ENCODE measurements at regions of chr17 and their contacts with region 1.

Region 1: GRCh38 chr17:81902023-81902652 is at the start of gene NPB:
- DNase-seq: peak; percentile 65 to 73 (median 68)
- ATAC-seq: peak; percentile 86
- H3K4me3 ChIP-seq: peak within 1 kb of the TSS; percentile 32; the same call in 1 of the 2 replicates
- H3K27ac ChIP-seq: peak within 1 kb of the TSS; percentile 27; the same call in 1 of the 3 replicates
- H3K4me1 ChIP-seq: peaks cover 10 to 84% of the 10 kb centered on the region in 2 experiments
- H3K27me3 ChIP-seq: no peaks in the 10 kb centered on the region
- CTCF ChIP-seq: no peak
- EP300 ChIP-seq: no peak
- POLR2A ChIP-seq: no peak
- RAD21 ChIP-seq: no peak
- polyA plus RNA-seq, gene NPB: 0.43 to 0.61 TPM

Region 2: DNA sequence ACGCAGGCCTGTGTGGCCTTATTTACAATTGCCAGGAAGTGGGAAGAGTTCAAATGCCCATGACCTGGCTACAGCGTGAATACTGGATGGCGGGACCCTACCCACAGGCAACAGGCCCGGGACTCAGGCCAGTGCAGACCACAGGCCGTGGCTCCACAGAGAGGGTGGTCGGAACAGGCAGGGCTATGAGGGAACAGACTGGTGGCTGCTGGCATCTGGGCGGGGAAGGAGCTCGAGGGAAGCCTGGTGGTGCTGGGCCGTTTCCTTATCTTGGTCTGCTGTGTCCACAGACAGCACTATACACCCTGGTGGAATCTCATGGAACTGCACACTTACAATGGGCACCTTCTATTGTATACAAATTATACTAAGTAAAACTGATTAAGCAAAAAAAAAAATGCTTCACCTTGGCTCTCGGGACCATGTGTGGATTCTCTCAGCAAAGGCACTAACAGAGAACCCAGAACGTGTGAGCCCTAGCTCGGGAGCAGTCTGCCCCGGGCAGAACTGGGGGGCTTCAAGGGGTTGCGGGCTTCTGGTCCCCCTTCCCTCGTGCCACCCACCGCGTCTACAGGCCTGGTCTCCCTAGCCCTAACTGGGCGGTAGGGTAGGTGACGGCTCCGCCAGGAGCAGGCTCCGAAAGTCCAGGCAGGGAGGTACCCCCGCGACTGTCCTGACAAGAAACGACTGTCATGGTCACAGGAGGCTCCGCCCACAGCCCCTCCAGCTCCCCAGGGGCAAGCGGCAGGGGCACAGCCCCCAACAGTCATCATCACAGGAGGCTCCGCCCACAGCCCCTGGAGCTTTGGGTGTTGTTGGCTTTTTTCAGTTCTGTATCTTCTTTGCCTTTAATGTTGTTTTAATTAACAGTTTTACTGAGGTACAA is 701.2 kb before region 1 on chr17:
- CTCF ChIA-PET with region 1: no interaction called
- POLR2A ChIA-PET with region 1: no interaction called
- in situ Hi-C with region 1: no loop called
- intact Hi-C with region 1: no loop called
- DNase-seq: peak; percentile 65 to 82 (median 75)
- ATAC-seq: peak; percentile 98
- H3K4me3 ChIP-seq: no peak overlapping the region
- H3K27ac ChIP-seq: no peak overlapping the region
- H3K4me1 ChIP-seq: peaks cover 3 to 31% of the 10 kb centered on the region in 2 experiments; a peak in 3 of 5 replicates
- H3K27me3 ChIP-seq: no peaks in the 10 kb centered on the region
- CTCF ChIP-seq: peak; percentile 73 to 81 (median 78)
- EP300 ChIP-seq: no peak
- POLR2A ChIP-seq: no peak
- RAD21 ChIP-seq: peak; percentile 41 to 66

Region 3: GRCh38 chr17:81884520-81884919 is 17.6 kb before region 1 on chr17:
- CTCF ChIA-PET with region 1: no interaction called
- POLR2A ChIA-PET with region 1: interaction called, 10 read pairs
- in situ Hi-C with region 1: no loop called
- intact Hi-C with region 1: no loop called
- DNase-seq: no peak
- ATAC-seq: peak; percentile 44
- H3K4me3 ChIP-seq: no peak overlapping the region
- H3K27ac ChIP-seq: no peak overlapping the region
- H3K4me1 ChIP-seq: peaks cover 0 to 30% of the 10 kb centered on the region in 2 experiments; a peak in 2 of 5 replicates
- H3K27me3 ChIP-seq: no peaks in the 10 kb centered on the region
- CTCF ChIP-seq: no peak
- EP300 ChIP-seq: no peak
- POLR2A ChIP-seq: no peak
- RAD21 ChIP-seq: no peak

Region 4: GRCh38 chr17:81917565-81918332 is 15.6 kb after region 1 on chr17 and contains the start of gene SIRT7:
- CTCF ChIA-PET with region 1: no interaction called
- POLR2A ChIA-PET with region 1: interaction called, 10 read pairs
- in situ Hi-C with region 1: no loop called
- intact Hi-C with region 1: no loop called
- DNase-seq: peak; percentile 88 to 96 (median 90)
- ATAC-seq: peak; percentile 70
- H3K4me3 ChIP-seq: peak within 1 kb of the TSS; percentile 91
- H3K27ac ChIP-seq: peak within 1 kb of the TSS; percentile 69
- H3K4me1 ChIP-seq: peaks cover 43 to 91% of the 10 kb centered on the region in 2 experiments
- H3K27me3 ChIP-seq: no peaks in the 10 kb centered on the region
- CTCF ChIP-seq: no peak
- EP300 ChIP-seq: no peak
- POLR2A ChIP-seq: no peak; the same call in none of the 2 replicates
- RAD21 ChIP-seq: 0 out of 4 replicates have a peak, but pooled peaks of 1 of the 2 experiments have one; percentile 17
- polyA plus RNA-seq, gene SIRT7: 1.6 to 2.0 TPM

Region 5: DNA sequence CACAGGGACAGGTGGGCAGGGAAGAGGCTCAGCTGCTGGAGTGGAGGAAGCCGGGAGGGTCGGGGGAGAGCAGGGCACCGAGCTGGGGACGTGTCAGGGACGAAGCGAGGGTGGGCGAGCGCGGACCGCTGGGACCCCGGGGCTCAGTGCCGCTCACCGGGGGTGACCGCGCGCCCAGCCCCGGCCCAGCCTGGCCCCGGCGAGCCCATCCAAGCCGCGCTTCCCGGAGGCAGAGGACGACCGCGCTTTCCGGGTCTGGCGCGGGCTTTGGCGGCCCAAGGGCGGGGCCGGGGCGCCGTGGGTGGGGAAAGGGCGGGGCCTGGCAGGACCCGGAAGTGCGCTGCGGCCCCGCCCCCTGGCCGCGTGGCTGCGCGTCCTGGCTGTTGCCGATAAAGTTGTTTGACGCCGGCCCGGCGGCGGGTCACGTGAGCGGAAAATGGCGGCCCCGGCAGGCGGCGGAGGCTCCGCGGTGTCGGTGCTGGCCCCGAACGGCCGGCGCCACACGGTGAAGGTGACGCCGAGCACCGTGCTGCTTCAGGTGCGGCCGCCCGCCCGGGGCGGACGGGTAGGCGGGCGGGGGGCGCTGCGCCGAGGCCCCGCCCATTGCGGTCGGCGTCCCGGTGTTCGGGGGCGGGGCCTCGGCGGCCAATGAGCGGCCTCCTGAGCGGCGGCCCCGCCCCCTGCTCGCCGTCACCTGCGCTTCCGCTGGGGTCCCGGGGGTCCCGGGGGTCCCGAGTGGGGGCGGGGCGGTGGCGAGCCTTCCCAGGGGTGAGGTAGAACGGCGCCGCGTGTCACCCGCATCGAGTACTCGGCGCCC is 75.3 kb after region 1 on chr17 and contains the start of gene ASPSCR1:
- CTCF ChIA-PET with region 1: no interaction called
- POLR2A ChIA-PET with region 1: no interaction called
- in situ Hi-C with region 1: no loop called
- intact Hi-C with region 1: no loop called
- DNase-seq: peak; percentile 91 to 98 (median 94)
- ATAC-seq: peak; percentile 91
- H3K4me3 ChIP-seq: peak within 1 kb of the TSS; percentile 88
- H3K27ac ChIP-seq: peak within 1 kb of the TSS; percentile 98
- H3K4me1 ChIP-seq: peaks cover 23 to 27% of the 10 kb centered on the region in 2 experiments
- H3K27me3 ChIP-seq: no peaks in the 10 kb centered on the region
- CTCF ChIP-seq: no peak
- EP300 ChIP-seq: peak; percentile 49; the same call in 1 of the 2 replicates
- POLR2A ChIP-seq: peak; percentile 92
- RAD21 ChIP-seq: no peak
- polyA plus RNA-seq, gene ASPSCR1: 0.90 to 2.2 TPM

Measured in K562 (cell line).